Endothelial cell of umbilical vein (primary cell): ENCODE measurements at regions of chr14 and their contacts with region 1.

Region 1: DNA sequence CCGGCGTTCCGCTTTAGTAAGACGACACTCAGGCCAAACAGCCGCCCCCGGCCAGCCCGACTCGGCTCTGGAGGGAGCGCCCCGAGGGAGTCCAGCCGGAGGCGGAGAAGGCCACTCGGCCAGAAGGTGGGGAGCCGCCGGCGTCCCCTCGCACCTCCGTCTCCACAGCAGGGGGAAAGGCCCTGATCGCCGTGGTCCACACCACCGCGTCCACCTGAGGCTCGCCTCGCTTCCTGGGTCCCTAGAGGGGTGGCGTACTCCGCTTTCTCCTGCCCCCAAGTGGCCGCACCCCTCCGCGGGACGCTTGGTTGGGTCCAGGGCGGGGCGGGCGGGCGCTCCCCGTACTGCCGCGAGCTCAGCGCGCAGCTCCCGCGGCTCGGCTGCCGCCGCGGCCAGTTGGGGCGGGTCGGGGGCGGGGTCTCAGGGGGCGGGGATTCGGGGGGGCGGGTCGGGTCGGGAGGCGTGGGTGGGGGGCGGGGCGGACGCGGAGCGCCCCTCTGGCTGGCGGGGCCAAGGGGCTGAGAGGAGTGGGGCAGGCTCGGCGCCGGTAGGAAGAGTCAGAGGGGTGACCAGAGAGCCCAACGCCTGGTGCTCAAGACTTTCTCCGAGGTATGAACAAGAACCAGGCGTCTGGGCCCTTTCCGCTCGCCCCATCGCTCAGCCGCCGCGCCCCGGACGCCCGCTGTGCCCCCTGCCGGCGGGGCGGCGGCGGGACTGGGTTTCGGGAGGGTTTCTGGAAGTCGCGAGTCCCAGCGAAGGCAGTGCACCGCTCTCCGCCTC is at the start of gene FRMD6:
- DNase-seq: peak; percentile 83
- H3K4me3 ChIP-seq: peak within 1 kb of the TSS; percentile 89 to 96 (median 93)
- H3K27ac ChIP-seq: peak within 1 kb of the TSS; percentile 96
- H3K4me1 ChIP-seq: peaks cover 43% of the 10 kb centered on the region
- H3K27me3 ChIP-seq: no peaks in the 10 kb centered on the region
- CTCF ChIP-seq: peak; percentile 73 to 75
- POLR2A ChIP-seq: peak; percentile 81
- total RNA-seq, gene FRMD6: 92.2 and 97.1 TPM in 2 replicates

Region 2: GRCh38 chr14:51283402-51284085 is 368.0 kb before region 1 on chr14:
- CTCF ChIA-PET with region 1: interaction called, 43 read pairs
- POLR2A ChIA-PET with region 1: interaction called, 7 read pairs
- dilution Hi-C with region 1: no loop called
- intact Hi-C with region 1: loop called (anchors 1 kb)
- DNase-seq: peak; percentile 93
- H3K4me3 ChIP-seq: no peak overlapping the region
- H3K27ac ChIP-seq: no peak overlapping the region
- H3K4me1 ChIP-seq: no peaks in the 10 kb centered on the region
- H3K27me3 ChIP-seq: no peaks in the 10 kb centered on the region
- CTCF ChIP-seq: peak; percentile 64 to 67
- POLR2A ChIP-seq: no peak

Region 3: GRCh38 chr14:51395361-51395849 is 256.2 kb before region 1 on chr14:
- CTCF ChIA-PET with region 1: interaction called, 38 read pairs
- POLR2A ChIA-PET with region 1: interaction called, 37 read pairs
- dilution Hi-C with region 1: no loop called
- intact Hi-C with region 1: loop called (anchors 1 kb)
- DNase-seq: peak; percentile 91
- H3K4me3 ChIP-seq: peak overlapping the region in 1 of 3 experiments; percentile 26
- H3K27ac ChIP-seq: peak overlapping the region; percentile 99
- H3K4me1 ChIP-seq: peaks cover 52% of the 10 kb centered on the region
- H3K27me3 ChIP-seq: no peaks in the 10 kb centered on the region
- CTCF ChIP-seq: no peak
- POLR2A ChIP-seq: no peak

Region 4: DNA sequence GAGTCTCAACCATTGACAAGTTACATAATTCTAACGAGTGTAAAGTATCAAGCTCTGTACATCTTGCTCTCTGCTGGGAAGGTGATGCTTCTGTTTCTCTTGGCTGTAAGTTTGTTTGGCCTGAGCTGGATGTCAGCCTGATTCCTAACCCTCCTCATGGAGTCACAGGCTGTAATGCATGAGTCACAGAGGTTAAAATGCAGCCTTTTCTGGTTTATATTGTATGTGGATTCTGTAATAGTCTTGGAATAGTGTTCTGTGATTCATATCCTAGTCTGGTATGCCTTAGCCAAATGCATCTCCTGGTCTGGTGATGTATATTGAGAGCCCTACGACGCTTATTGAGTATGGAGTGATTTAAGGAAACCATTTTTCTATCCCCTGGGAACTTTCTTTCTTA is 104.3 kb before region 1 on chr14:
- CTCF ChIA-PET with region 1: interaction called, 14 read pairs
- POLR2A ChIA-PET with region 1: interaction called, 8 read pairs
- dilution Hi-C with region 1: no loop called
- intact Hi-C with region 1: loop called (anchors 1 kb)
- DNase-seq: peak; percentile 99
- H3K4me3 ChIP-seq: no peak overlapping the region
- H3K27ac ChIP-seq: peak overlapping the region; percentile 96
- H3K4me1 ChIP-seq: peaks cover 32% of the 10 kb centered on the region
- H3K27me3 ChIP-seq: no peaks in the 10 kb centered on the region
- CTCF ChIP-seq: no peak
- POLR2A ChIP-seq: peak; percentile 80

Region 5: GRCh38 chr14:51704545-51704944 is 53.0 kb after region 1 on chr14:
- CTCF ChIA-PET with region 1: interaction called, 3 read pairs
- POLR2A ChIA-PET with region 1: interaction called, 3 read pairs
- dilution Hi-C with region 1: no loop called
- intact Hi-C with region 1: loop called (anchors 1 kb)
- DNase-seq: peak; percentile 81
- H3K4me3 ChIP-seq: no peak overlapping the region
- H3K27ac ChIP-seq: no peak overlapping the region
- H3K4me1 ChIP-seq: peaks cover 11% of the 10 kb centered on the region
- H3K27me3 ChIP-seq: no peaks in the 10 kb centered on the region
- CTCF ChIP-seq: peak in 1 of 2 donors; percentile 15
- POLR2A ChIP-seq: no peak

Region 6: GRCh38 chr14:51818748-51819380 is 167.3 kb after region 1 on chr14:
- CTCF ChIA-PET with region 1: no interaction called
- POLR2A ChIA-PET with region 1: no interaction called
- dilution Hi-C with region 1: no loop called
- intact Hi-C with region 1: no loop called
- DNase-seq: no peak
- H3K4me3 ChIP-seq: no peak overlapping the region
- H3K27ac ChIP-seq: no peak overlapping the region
- H3K4me1 ChIP-seq: no peaks in the 10 kb centered on the region
- H3K27me3 ChIP-seq: peaks cover 5 to 11% of the 10 kb centered on the region in 2 experiments
- CTCF ChIP-seq: no peak
- POLR2A ChIP-seq: no peak

Region 7: DNA sequence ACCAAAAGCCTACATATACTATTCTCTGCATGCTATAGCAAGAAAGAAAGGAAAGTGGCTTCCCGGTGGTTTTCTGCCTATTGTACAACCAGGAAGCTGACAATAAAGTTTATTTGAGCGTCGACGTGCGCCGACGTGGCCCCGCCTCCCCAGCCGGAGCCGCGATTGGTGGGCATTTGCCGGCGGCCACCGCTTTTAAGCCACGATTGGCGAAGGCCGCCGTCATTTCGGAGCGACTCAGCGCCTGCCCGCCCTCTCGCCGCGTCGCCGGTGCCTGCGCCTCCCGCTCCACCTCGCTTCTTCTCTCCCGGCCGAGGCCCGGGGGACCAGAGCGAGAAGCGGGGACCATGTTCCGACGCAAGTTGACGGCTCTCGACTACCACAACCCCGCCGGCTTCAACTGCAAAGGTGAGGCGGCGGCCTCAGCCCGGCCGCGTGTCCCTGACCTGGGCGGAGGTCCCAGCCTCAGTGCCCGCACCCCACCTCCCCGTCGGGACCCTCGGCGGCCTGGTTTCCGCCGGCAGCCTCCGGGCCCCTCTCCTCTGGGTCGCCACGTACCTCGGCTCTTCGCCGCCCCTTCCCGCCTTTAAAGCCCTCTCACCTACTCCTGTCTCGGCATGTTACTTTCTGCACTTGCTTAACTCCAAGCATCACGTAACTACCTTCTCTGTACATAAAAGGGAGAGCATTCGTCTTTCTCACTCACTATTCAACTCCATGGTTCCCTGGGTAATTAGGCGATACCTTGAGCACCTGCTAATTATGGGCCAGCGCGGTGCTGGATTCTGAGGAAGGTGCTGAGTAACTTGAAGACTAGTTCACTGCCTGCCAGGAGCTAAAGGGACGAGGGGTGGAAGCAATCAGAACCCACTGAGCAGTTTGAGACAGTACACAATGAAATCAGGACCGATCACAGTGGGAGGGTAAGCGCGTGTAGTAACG is 338.0 kb after region 1 on chr14 and contains the start of gene RTRAF:
- CTCF ChIA-PET with region 1: no interaction called
- POLR2A ChIA-PET with region 1: no interaction called
- dilution Hi-C with region 1: no loop called
- intact Hi-C with region 1: loop called (anchors 10 kb)
- DNase-seq: peak; percentile 97
- H3K4me3 ChIP-seq: peak within 1 kb of the TSS; percentile 57 to 87 (median 58)
- H3K27ac ChIP-seq: peak within 1 kb of the TSS; percentile 47
- H3K4me1 ChIP-seq: peaks cover 14% of the 10 kb centered on the region
- H3K27me3 ChIP-seq: peaks cover 7 to 9% of the 10 kb centered on the region in 2 experiments
- CTCF ChIP-seq: no peak
- POLR2A ChIP-seq: peak; percentile 84
- total RNA-seq, gene RTRAF: 225 and 237 TPM in 2 replicates